T-cell (primary cell): ENCODE measurements at regions of chr19 and their contacts with region 1.

Region 1: GRCh38 chr19:44925114-44925891 is 10.9 kb downstream of the APOC1 start:
- DNase-seq: no peak
- ATAC-seq: no peak
- H3K4me3 ChIP-seq: no peak overlapping the region
- H3K4me3 Mint-ChIP-seq: no peak overlapping the region
- H3K27ac ChIP-seq: no peak overlapping the region
- H3K27ac Mint-ChIP-seq: no peak overlapping the region
- H3K4me1 ChIP-seq: peaks cover 0 to 6% of the 10 kb centered on the region in 2 experiments
- H3K4me1 Mint-ChIP-seq: peaks cover 5 to 8% (median 5%) of the 10 kb centered on the region in 3 donors
- H3K27me3 ChIP-seq: peaks cover 0 to 39% of the 10 kb centered on the region in 2 experiments
- H3K27me3 Mint-ChIP-seq: peaks cover 21 to 22% of the 10 kb centered on the region in 2 donors

Region 2: GRCh38 chr19:44083866-44084265 is 841.4 kb before region 1 on chr19:
- CTCF ChIA-PET with region 1: no interaction called
- POLR2A ChIA-PET with region 1: no interaction called
- DNase-seq: no peak
- ATAC-seq: no peak
- H3K4me3 ChIP-seq: no peak overlapping the region
- H3K4me3 Mint-ChIP-seq: no peak overlapping the region
- H3K27ac ChIP-seq: no peak overlapping the region
- H3K27ac Mint-ChIP-seq: no peak overlapping the region
- H3K4me1 ChIP-seq: no peaks in the 10 kb centered on the region
- H3K4me1 Mint-ChIP-seq: no peaks in the 10 kb centered on the region
- H3K27me3 ChIP-seq: no peaks in the 10 kb centered on the region
- H3K27me3 Mint-ChIP-seq: no peaks in the 10 kb centered on the region

Region 3: GRCh38 chr19:44905437-44906160 is 19.7 kb before region 1 on chr19 and contains the start of gene APOE:
- CTCF ChIA-PET with region 1: no interaction called
- POLR2A ChIA-PET with region 1: interaction called in 1 of 2 experiments, 17 read pairs
- DNase-seq: no peak
- ATAC-seq: no peak
- H3K4me3 ChIP-seq: no peak within 1 kb of the TSS
- H3K4me3 Mint-ChIP-seq: peak within 1 kb of the TSS in 1 of 3 donors; percentile 43
- H3K27ac ChIP-seq: no peak within 1 kb of the TSS
- H3K27ac Mint-ChIP-seq: no peak within 1 kb of the TSS
- H3K4me1 ChIP-seq: peaks cover 0 to 17% of the 10 kb centered on the region in 2 experiments
- H3K4me1 Mint-ChIP-seq: peaks cover 8 to 12% (median 8%) of the 10 kb centered on the region in 3 donors
- H3K27me3 ChIP-seq: peaks cover 0 to 51% of the 10 kb centered on the region in 2 experiments
- H3K27me3 Mint-ChIP-seq: peaks cover 19 to 23% of the 10 kb centered on the region in 2 donors
- total RNA-seq, gene APOE: 2.0 to 9.5 (median 6.8) TPM